Activated CD4-positive, alpha-beta memory T cell treated with anti-CD3 and anti-CD28 coated beads, Interleukin-2, amount 10 ng/mL, durations not matched to agents 7 days and 5 days (primary cell): ENCODE measurements at regions of chr2 and their contacts with region 1.

Region 1: DNA sequence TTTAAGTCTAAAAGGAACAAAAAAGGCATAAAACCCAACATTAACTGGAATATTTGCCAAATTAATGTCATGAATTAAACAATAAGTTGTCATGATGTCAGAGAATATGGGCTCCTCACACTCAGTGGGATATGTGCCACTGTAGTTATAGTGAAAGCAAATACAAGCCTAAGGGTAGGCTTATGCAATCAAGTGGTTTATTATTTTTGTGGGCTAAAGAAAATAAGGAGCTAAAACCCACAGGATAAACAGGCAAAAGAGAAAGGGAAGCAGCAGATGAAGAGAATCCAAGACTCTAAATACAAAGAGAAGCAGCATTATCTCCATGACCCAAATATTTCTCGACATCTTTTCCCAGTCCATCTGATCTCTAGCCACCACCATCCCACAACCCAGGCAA is 17.5 kb downstream of the YWHAQ start:
- DNase-seq: no peak
- H3K4me3 Mint-ChIP-seq: no peak overlapping the region
- H3K27ac Mint-ChIP-seq: no peak overlapping the region
- H3K4me1 Mint-ChIP-seq: peaks cover 89% of the 10 kb centered on the region
- H3K27me3 Mint-ChIP-seq: no peaks in the 10 kb centered on the region

Region 2: DNA sequence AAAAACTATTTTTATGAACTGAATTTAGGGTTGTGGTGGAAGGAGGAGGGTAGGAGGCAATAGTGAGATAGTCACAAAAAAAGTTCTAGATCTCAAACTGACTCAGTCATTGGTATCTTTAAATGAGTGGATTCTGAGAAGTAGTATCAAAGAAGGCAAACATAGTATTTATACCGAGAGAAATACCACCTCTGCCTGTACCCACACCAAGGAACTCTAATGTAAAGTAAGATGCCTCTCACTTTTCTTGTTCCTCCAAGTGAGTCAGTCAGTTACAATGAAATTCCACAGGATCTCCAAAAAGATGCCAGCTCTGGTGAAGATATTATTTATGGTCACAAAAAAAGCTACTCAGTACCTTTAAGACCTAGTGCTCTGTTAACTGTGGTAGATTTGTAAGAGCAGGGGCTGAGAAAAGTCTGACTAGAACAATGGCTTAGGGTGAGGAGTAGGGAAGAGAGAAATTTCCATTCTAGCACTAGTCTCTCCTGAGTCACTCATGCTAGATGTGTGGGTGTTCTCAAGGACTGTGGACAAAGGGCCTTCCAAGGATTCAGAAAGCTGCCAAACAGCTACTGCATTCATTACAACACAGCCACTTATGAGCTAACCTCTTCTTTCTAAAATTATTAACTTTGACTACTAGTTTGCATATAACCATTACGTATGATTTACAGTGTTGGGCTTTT is 18.8 kb before region 1 on chr2:
- CTCF ChIA-PET with region 1: no interaction called
- POLR2A ChIA-PET with region 1: interaction called, 22 read pairs
- DNase-seq: no peak
- H3K4me3 Mint-ChIP-seq: peak overlapping the region; percentile 22
- H3K27ac Mint-ChIP-seq: peak overlapping the region; percentile 66
- H3K4me1 Mint-ChIP-seq: peaks cover 65% of the 10 kb centered on the region
- H3K27me3 Mint-ChIP-seq: no peaks in the 10 kb centered on the region